Activated CD4-positive, alpha-beta T cell treated with anti-CD3 and anti-CD28 coated beads, Interleukin-2, amount 10 ng/mL, durations not matched to agents 24 days and 14 days (primary cell): ENCODE measurements at regions of chr12 and their contacts with region 1.

Region 1: DNA sequence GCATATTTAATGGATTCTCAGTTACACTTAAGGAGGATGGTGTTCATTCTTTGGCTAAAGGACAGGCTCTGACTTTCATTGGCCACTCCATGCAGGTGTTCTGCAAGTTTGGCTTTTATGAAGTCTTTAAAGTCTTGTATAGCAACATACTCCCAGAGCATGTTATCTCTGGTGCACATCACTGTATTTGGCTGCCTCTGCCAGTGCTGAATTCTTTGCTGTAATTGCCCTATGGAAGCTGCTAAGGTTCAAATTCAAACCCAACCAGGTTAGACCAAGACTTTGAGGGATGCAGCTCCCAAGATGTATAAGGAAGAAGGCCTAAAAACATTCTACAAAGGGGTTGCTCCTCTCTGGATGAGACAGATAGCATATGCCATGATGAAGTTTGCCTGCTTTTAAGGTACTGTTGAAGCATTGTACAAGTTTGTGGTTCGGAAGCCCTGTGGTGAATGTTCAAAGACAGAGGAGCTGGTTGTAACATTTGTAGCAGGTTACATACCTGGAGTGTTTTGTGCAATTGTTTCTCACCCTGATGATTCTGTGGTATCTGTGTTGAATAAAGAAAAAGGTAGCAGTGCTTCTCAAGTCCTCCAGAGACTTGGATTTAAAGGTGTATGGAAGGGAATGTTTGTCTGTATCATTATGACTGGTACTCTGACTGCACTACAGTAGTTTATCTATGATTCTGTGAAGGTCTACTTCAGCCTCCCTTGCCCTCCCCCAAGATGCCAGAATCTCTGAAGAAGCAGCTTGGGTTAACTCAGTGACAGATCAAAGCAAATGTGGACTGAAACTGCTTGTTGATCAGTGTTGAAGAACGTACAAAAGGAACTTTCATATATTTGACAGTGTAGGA is 19.4 kb downstream of the TMEM116 start:
- DNase-seq: peak; percentile 84
- H3K4me3 Mint-ChIP-seq: peak overlapping the region; percentile 86
- H3K27ac Mint-ChIP-seq: peak overlapping the region; percentile 76
- H3K4me1 Mint-ChIP-seq: peaks cover 49% of the 10 kb centered on the region
- H3K27me3 Mint-ChIP-seq: no peaks in the 10 kb centered on the region

Region 2: GRCh38 chr12:111570084-111570961 is 423.2 kb before region 1 on chr12:
- intact Hi-C with region 1: no loop called
- DNase-seq: no peak
- H3K4me3 Mint-ChIP-seq: no peak overlapping the region
- H3K27ac Mint-ChIP-seq: no peak overlapping the region
- H3K4me1 Mint-ChIP-seq: peaks cover 13% of the 10 kb centered on the region
- H3K27me3 Mint-ChIP-seq: no peaks in the 10 kb centered on the region

Region 3: DNA sequence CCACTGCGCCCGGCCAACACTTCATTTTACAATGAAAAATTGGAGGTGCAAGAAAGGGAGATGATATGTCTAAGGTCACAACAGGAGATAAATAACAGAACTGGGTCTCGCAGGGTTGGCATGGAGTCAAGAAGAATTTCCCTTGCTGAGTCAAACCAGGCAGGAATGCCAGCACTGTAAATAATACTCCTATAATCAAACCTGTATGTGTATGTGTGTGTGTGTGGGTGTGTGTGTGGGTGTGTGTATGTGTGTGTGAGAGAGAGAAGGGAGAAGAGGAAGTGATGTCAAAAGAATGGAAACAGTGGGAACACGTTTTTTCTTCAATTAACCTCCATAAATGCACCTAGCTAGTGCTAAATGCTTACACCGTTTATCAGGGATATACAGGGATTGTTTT is 51.0 kb before region 1 on chr12:
- intact Hi-C with region 1: loop called (anchors 5 kb)
- DNase-seq: no peak
- H3K4me3 Mint-ChIP-seq: no peak overlapping the region
- H3K27ac Mint-ChIP-seq: peak overlapping the region; percentile 77
- H3K4me1 Mint-ChIP-seq: peaks cover 13% of the 10 kb centered on the region
- H3K27me3 Mint-ChIP-seq: no peaks in the 10 kb centered on the region

Region 4: GRCh38 chr12:112130441-112130998 is 137.0 kb after region 1 on chr12:
- intact Hi-C with region 1: loop called (anchors 2 kb)
- DNase-seq: peak; percentile 76
- H3K4me3 Mint-ChIP-seq: peak overlapping the region; percentile 78
- H3K27ac Mint-ChIP-seq: peak overlapping the region; percentile 85
- H3K4me1 Mint-ChIP-seq: peaks cover 44% of the 10 kb centered on the region
- H3K27me3 Mint-ChIP-seq: no peaks in the 10 kb centered on the region

Region 5: GRCh38 chr12:112183141-112184021 is 189.9 kb after region 1 on chr12:
- intact Hi-C with region 1: loop called (anchors 5 kb)
- DNase-seq: peak; percentile 53
- H3K4me3 Mint-ChIP-seq: no peak overlapping the region
- H3K27ac Mint-ChIP-seq: peak overlapping the region; percentile 31
- H3K4me1 Mint-ChIP-seq: peaks cover 11% of the 10 kb centered on the region
- H3K27me3 Mint-ChIP-seq: no peaks in the 10 kb centered on the region

Region 6: GRCh38 chr12:112194601-112195247 is 201.2 kb after region 1 on chr12:
- intact Hi-C with region 1: no loop called
- DNase-seq: no peak
- H3K4me3 Mint-ChIP-seq: no peak overlapping the region
- H3K27ac Mint-ChIP-seq: no peak overlapping the region
- H3K4me1 Mint-ChIP-seq: no peaks in the 10 kb centered on the region
- H3K27me3 Mint-ChIP-seq: no peaks in the 10 kb centered on the region

Region 7: GRCh38 chr12:112349431-112349830 is 355.9 kb after region 1 on chr12:
- intact Hi-C with region 1: no loop called
- DNase-seq: no peak
- H3K4me3 Mint-ChIP-seq: no peak overlapping the region
- H3K27ac Mint-ChIP-seq: no peak overlapping the region
- H3K4me1 Mint-ChIP-seq: peaks cover 12% of the 10 kb centered on the region
- H3K27me3 Mint-ChIP-seq: no peaks in the 10 kb centered on the region